ENCODE measurements at regions of chr2 and their contacts with region 1.

Region 1: DNA sequence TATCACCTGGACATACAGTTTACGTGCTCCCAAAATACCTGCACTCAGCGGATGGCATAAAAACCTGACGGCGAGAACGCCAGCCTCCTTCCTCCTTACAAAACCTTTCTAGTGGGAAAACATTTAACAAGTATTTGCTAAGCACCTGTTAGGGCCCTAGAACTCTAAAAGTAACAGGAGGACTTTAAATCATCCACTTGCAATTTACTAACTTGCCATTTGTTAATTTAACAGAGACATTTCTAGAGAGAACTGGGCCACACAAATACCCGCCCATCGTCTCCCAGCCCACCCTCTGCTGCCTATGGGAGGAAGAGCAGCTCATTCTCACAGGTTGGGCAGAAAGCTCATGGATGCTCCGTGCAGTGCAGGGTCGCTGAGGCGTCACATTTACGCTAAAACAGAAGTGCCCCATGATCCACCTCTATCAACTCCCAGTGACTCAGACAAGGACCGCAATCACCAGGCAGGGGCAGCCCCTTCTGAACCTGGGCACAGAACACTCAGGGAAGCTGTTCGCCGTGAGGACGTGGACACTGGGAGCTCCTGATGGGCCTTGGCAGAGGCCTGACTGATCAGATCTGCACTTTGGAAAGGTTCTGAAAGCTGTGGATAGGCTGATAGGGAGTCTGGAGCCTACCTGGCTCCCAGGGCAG is 106.9 kb downstream of the HDAC4 start:
- DNase-seq: peak; percentile 26
- ATAC-seq: peak; percentile 95
- H3K4me3 ChIP-seq: no peak overlapping the region
- H3K27ac ChIP-seq: no peak overlapping the region
- H3K4me1 ChIP-seq: peaks cover 17% of the 10 kb centered on the region
- H3K27me3 ChIP-seq: no peaks in the 10 kb centered on the region
- CTCF ChIP-seq: 0 out of 6 replicates have a peak, but pooled peaks of 1 of the 3 experiments have one; percentile 1
- EP300 ChIP-seq: peak in 1 of 2 experiments; percentile 70; a peak in 3 of 4 replicates
- POLR2A ChIP-seq: no peak
- RAD21 ChIP-seq: no peak

Region 2: DNA sequence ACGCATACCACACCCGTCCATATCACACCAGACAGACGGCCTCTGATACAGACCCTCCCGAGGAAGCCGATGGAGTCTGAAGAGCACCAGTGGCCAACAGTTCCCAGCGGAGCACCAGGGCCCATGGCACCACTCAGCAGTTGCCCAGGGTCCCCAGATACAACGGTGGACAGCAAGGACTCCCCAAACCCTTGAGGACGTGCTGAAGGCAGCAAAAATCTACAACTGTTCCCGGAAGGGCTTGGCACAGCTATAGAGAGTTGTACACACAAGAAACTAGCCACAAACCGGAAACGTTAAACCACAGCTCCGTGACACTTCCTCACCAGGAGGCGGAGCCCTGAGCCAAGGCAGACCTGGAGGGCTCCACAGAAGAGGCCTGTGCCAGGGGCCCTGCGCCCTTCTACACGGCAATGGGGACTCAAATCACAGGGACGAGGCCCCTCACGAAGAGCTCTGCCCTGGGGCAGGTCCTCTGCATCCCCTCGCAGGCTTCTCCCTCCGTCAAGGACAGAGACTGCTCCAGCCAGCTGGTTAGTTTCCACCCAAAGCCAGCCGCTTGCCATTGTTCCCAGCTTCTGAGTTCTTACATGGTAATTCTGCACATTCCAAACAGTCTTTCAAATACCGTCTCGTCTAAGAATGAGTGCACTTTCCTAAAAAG is 26.5 kb before region 1 on chr2:
- CTCF ChIA-PET with region 1: interaction called, 10 read pairs
- POLR2A ChIA-PET with region 1: no interaction called
- RAD21 ChIA-PET with region 1: no interaction called
- SMC1A ChIA-PET with region 1: interaction called, 7 read pairs
- in situ Hi-C with region 1: no loop called
- intact Hi-C with region 1: no loop called
- DNase-seq: peak; percentile 65
- ATAC-seq: peak; percentile 95
- H3K4me3 ChIP-seq: peak overlapping the region; percentile 45; the same call in 1 of the 2 replicates
- H3K27ac ChIP-seq: no peak overlapping the region
- H3K4me1 ChIP-seq: peaks cover 44% of the 10 kb centered on the region
- H3K27me3 ChIP-seq: no peaks in the 10 kb centered on the region
- CTCF ChIP-seq: peak; percentile 42 to 71 (median 57); a peak in 5 of 6 replicates
- EP300 ChIP-seq: no peak
- POLR2A ChIP-seq: peak; percentile 59; the same call in 1 of the 2 replicates
- RAD21 ChIP-seq: peak; percentile 81

Region 3: GRCh38 chr2:239303711-239304532 is 10.0 kb after region 1 on chr2:
- CTCF ChIA-PET with region 1: interaction called, 4 read pairs
- POLR2A ChIA-PET with region 1: interaction called, 4 read pairs
- RAD21 ChIA-PET with region 1: interaction called, 11 read pairs
- SMC1A ChIA-PET with region 1: interaction called, 12 read pairs
- in situ Hi-C with region 1: no loop called
- intact Hi-C with region 1: no loop called
- DNase-seq: no peak
- ATAC-seq: peak; percentile 89
- H3K4me3 ChIP-seq: no peak overlapping the region
- H3K27ac ChIP-seq: no peak overlapping the region
- H3K4me1 ChIP-seq: peaks cover 22% of the 10 kb centered on the region
- H3K27me3 ChIP-seq: no peaks in the 10 kb centered on the region
- CTCF ChIP-seq: no peak
- EP300 ChIP-seq: peak; percentile 66 to 87; a peak in 2 of 4 replicates
- POLR2A ChIP-seq: no peak
- RAD21 ChIP-seq: no peak

Region 4: DNA sequence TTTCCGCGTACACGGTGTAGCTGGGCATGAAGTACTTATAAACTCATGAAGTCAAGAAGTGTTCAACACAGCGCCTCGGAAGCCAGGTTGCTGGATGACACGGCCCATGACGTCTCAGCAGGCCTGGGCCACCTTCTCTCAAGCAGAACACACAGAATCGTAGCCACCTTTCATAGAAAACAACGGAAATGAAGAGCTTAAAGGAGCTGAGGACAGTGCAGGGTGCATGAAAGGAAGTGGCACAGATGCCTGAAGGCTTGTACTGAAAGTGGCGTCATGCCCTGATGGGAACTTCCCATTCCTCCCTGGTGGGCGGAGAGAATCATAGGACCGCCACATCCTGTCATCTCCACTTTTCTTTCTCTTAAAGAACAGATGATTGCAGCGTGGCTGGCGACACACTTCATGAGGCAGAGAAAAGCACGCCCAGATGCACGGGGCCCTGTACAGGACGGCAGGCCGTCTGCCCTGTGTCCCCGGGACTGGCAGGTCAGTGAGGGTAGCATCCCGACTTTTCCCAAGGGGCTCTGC is 75.8 kb after region 1 on chr2:
- CTCF ChIA-PET with region 1: no interaction called
- POLR2A ChIA-PET with region 1: no interaction called
- RAD21 ChIA-PET with region 1: no interaction called
- SMC1A ChIA-PET with region 1: interaction called, 10 read pairs
- in situ Hi-C with region 1: no loop called
- intact Hi-C with region 1: no loop called
- DNase-seq: peak; percentile 83
- ATAC-seq: peak; percentile 96
- H3K4me3 ChIP-seq: peak overlapping the region; percentile 34; the same call in 1 of the 2 replicates
- H3K27ac ChIP-seq: peak overlapping the region; percentile 9; the same call in 1 of the 2 replicates
- H3K4me1 ChIP-seq: peaks cover 14% of the 10 kb centered on the region
- H3K27me3 ChIP-seq: no peaks in the 10 kb centered on the region
- CTCF ChIP-seq: no peak
- EP300 ChIP-seq: peak in 1 of 2 experiments; percentile 21; a peak in 2 of 4 replicates
- POLR2A ChIP-seq: no peak
- RAD21 ChIP-seq: no peak